Mammary epithelial cell (primary cell): ENCODE measurements at regions of chr6 and their contacts with region 1.

Region 1: DNA sequence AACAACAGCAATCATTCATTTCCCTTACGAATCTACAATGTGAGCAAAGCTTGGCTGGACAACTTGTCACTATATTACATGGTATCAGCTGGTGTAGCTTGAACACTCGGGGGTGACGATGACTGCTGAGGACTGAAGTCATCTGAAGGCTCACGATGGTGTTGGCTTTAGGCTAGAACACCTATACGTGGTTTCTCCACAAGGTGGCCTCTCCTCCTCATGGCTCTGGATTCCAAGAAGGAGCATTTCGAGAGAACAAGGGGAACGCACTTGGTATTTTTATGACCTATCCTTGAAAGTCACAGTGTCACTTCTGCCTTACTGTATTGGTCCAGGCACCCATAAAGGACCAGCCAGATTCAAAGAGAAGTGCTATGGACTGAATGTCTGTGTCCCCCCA is 37.5 kb upstream of the ADGRF1 start:
- DNase-seq: no peak
- H3K4me3 ChIP-seq: no peak overlapping the region
- H3K27ac ChIP-seq: no peak overlapping the region
- H3K4me1 ChIP-seq: peaks cover 34% of the 10 kb centered on the region
- H3K27me3 ChIP-seq: no peaks in the 10 kb centered on the region
- CTCF ChIP-seq: peak in 1 of 2 donors; percentile 19

Region 2: DNA sequence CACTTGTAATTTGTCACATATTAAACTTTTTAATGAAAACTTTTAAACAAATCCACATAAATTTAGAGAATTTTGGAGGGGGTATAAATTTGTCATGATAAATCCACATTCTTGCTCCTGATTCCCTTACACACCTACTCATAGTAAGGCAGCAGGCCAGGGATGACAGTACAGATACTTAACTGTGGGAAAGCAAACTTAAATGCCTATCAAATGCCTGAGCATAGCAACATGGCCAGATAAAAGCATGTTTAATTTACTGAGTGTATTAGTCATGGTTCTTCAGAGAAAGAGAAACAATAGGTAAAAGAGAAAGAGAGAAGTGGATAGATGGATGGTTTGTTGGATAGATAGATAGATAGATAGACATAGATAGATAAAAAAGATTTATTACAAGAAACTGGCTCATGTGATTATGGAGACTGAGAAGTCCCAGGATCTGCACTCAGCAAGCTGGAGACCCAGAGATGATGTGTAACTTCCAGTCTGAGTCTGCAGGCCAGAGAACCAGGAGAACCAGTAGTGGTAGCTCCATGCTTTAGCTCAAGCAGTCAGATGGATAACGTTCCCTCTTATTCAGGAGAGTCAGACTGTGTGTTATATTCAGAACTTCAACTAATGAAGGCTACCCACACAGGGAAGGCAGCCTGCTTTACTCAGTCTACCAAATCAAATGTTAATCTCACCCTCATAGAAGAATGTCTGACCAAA is 21.7 kb before region 1 on chr6:
- CTCF ChIA-PET with region 1: no interaction called
- dilution Hi-C with region 1: no loop called
- in situ Hi-C with region 1: no loop called
- intact Hi-C with region 1: loop called (anchors 1 kb)
- DNase-seq: peak; percentile 93
- H3K4me3 ChIP-seq: no peak overlapping the region
- H3K27ac ChIP-seq: peak overlapping the region; percentile 76
- H3K4me1 ChIP-seq: peaks cover 47% of the 10 kb centered on the region
- H3K27me3 ChIP-seq: no peaks in the 10 kb centered on the region
- CTCF ChIP-seq: no peak